ENCODE measurements at regions of chr2 and their contacts with region 1.

Region 1: DNA sequence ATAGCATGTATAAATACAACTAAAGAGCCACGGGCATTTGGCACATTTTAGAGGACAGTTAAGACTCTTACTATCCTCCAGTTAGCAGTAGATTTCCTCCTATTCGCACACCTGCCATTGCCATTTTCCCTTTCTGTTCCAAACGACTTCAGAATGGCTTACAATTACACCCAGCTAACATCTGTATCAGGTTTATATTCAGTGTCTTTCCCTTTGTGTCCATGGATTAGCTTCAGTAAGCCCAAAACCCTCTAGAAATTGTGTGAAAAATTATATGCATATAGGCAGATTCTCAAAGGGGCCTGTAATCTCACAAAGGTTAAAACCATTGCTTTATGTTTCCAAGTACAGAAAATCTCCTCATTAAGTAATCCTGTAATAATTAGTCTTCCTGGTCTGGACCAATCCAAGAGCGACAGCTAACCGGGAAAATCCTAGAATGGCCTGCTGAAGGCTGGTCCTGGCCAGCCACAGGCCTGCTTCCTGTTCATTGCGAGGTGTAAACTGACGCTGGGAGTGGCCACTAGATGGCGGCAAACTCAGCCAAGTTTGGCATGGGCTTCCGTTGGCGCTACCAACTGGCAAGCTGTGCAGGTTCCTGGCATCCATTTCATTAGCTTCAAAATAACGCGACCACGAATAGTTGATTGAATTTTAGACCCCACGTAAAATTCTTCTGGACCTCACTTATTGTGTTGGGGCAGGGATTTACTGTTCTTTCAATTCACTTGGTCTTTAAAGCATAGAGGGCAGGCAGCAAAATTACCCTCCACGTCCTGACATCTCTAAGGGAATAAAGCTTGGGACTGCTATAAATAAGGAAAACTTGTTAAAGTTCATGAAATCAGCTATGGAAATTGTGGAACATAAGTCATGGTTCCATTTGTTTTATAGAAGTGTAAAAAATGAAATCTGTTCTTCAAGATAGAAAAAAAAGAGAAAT is 17.1 kb downstream of the ARHGAP25 start:
- DNase-seq: peak; percentile 67 to 93 (median 88)
- H3K4me3 ChIP-seq: peak overlapping the region in 19 of 59 donors; percentile 2 to 40 (median 26)
- H3K27ac ChIP-seq: peak overlapping the region in 4 of 59 donors; percentile 5 to 32 (median 21)
- H3K27me3 ChIP-seq: no peaks in the 10 kb centered on the region
- CTCF ChIP-seq: peak; percentile 62 to 99 (median 96)

Region 2: DNA sequence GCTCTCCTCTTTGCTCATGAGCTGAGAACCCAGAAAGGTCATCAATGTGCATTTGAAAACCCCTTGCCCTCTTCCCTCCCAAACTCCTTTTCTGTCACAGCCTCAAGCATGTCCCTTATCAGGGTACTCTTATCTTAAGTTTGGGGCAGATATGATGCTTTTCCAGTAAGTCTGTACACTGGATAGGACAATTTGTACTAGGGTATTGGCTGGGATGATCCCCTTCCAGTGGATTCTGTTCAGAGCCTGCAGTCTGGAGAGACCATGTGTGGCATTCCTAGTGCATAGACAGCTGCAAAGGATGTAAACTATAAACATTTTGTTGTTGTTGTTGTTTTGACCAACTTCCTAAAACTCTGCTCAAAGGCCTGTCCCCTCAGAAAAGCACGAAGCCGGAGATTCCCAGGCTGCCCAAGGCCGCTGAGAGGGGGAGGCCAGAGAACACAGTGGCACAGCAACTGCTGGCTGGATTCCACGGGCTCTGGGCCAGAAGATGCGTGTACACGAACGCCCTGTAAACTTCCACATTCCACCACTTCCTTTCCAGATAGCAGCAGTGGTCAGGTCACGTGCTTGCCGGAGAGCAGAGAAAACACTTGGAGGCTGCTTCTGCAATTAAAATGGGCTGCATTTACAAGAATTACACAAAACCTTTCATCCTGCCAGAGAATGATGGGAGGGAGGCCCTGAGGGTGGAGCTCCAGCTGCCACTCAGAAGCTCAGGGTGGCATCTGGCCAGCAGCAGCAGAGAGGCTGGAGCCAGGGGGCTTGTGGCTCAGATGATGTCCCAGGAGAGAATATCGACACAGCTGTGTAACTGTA is 77.4 kb after region 1 on chr2:
- intact Hi-C with region 1: loop called in 1 of 2 experiments (anchors 5 kb)
- DNase-seq: peak; percentile 25 to 94 (median 86)
- H3K4me3 ChIP-seq: peak overlapping the region in 51 of 59 donors; percentile 1 to 60 (median 31)
- H3K27ac ChIP-seq: peak overlapping the region; percentile 28 to 93 (median 85)
- H3K27me3 ChIP-seq: no peaks in the 10 kb centered on the region
- CTCF ChIP-seq: peak in 24 of 56 donors; percentile 8 to 40 (median 20)

Region 3: DNA sequence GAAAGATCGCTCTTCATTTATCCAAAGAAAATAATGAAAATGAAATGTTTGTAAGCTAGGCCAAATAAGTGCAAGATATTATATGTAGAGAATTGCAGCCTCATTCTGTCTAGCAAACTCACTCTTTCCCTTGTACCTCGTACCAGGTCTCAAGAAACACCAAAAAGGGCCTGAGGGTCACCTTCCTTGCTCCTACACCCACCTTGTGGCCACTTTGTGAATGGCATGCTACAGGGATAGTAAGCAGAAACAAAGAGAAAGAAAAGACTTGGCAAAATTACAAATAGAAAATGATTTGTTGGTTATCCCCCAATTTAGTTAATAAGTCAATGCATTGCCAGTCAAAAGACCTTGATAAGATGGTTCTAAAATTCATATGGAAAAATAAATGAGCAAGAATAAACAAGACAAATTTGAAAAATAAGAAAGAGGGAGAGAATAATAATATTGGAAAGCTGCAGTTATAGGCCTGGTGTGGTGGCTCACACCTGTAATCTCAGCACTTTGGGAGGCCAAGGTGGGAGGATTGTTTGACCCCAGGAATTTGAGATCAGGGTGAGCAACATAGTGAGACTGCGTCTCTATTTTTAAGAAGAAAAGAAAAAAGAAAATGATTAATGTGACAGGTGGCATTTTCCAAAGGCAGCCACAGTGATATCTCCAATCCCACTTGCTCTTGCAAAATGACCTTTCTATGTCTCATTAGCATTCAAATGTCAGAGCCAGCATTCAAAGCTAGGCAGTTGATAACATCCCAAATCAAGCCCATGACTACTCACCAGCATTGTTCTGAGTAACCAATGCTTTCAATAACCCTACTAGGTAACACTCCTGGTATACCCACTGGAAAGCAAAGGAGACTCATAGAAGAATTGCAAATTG is 158.4 kb after region 1 on chr2:
- intact Hi-C with region 1: loop called (anchors 2 to 5 kb)
- DNase-seq: peak in 9 of 10 donors; percentile 13 to 72 (median 55)
- H3K4me3 ChIP-seq: no peak overlapping the region
- H3K27ac ChIP-seq: no peak overlapping the region
- H3K27me3 ChIP-seq: no peaks in the 10 kb centered on the region
- CTCF ChIP-seq: peak; percentile 77 to 98 (median 92)

Region 4: GRCh38 chr2:69535817-69536241 is 784.2 kb after region 1 on chr2:
- intact Hi-C with region 1: no loop called
- DNase-seq: no peak
- H3K4me3 ChIP-seq: no peak overlapping the region
- H3K27ac ChIP-seq: peak overlapping the region in 2 of 59 donors; percentile 2 to 5
- H3K27me3 ChIP-seq: no peaks in the 10 kb centered on the region
- CTCF ChIP-seq: no peak